HCT116 (cell line): ENCODE measurements at regions of chr1 and their contacts with region 1.

Region 1: DNA sequence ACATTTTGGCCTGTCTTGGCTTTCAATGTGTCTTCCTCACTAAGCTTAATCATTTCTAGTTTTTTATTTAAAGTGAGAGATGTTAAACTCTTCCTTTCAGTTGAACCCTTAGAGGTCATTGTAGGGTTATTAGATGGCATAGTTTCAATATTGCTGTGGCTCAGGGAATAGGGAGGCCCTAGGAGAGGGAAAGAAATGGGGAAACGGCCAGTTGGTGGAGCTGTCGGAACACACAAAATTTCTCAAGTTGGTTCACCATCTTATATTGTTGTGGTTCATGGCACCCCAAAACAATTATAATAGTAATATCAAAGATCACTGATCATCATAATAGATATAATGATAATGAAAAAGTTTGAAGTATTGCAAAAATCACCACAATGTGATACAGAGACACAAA is 31.4 kb upstream of the KAZN start:
- DNase-seq: peak; percentile 8
- ATAC-seq: peak; percentile 71; the same call in 1 of the 2 replicates
- H3K4me3 ChIP-seq: no peak overlapping the region
- H3K27ac ChIP-seq: no peak overlapping the region
- H3K4me1 ChIP-seq: no peaks in the 10 kb centered on the region
- H3K27me3 ChIP-seq: no peaks in the 10 kb centered on the region
- CTCF ChIP-seq: peak; percentile 32 to 50 (median 33); a peak in 5 of 6 replicates
- POLR2A ChIP-seq: no peak
- RAD21 ChIP-seq: peak; percentile 67

Region 2: DNA sequence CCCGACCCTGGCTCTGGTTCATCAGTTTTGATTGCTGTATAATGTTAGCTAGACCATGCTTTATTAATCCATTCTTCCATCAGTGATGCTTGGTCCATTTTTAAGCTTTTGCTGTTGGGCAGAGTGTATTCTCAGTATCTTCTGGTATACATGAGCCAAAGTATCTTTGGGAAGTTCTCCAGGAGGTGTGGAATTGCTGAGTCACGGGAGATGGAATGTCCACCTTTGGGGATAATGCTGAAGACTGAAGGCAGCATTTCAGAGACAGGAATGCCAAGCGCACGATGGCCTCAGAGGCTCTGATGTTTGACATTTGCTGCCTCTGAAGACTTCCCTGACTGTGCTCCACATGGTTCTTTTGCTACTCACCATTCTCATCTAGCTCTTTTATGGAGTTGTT is 234.9 kb before region 1 on chr1:
- CTCF ChIA-PET with region 1: no interaction called
- POLR2A ChIA-PET with region 1: no interaction called
- RAD21 ChIA-PET with region 1: no interaction called
- intact Hi-C with region 1: no loop called
- DNase-seq: no peak
- ATAC-seq: no peak
- H3K4me3 ChIP-seq: no peak overlapping the region
- H3K27ac ChIP-seq: no peak overlapping the region
- H3K4me1 ChIP-seq: peaks cover 0 to 17% of the 10 kb centered on the region in 2 experiments; a peak in 2 of 4 replicates
- H3K27me3 ChIP-seq: no peaks in the 10 kb centered on the region
- CTCF ChIP-seq: no peak
- POLR2A ChIP-seq: no peak
- RAD21 ChIP-seq: no peak

Region 3: DNA sequence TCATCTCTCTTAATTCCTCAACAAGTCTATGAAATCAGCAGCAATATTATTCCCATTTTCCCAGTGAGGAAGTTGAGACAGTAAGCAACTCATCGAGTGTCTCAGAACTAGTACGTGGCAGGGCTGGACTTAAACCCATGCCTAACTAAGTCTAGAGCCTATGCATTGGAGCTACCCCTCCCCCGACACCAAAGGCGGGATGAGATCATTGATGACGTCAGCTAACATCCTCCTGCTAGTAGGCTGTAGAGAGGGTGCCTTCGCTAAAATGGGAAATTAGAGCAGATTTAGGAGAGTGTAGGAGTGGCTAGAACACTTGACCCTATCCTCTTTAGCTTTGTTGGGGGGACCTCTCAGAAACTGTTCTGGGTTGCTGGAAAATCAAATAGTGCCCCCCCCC is 23.7 kb after region 1 on chr1:
- CTCF ChIA-PET with region 1: no interaction called
- POLR2A ChIA-PET with region 1: no interaction called
- RAD21 ChIA-PET with region 1: no interaction called
- intact Hi-C with region 1: no loop called
- DNase-seq: no peak
- ATAC-seq: no peak
- H3K4me3 ChIP-seq: no peak overlapping the region
- H3K27ac ChIP-seq: no peak overlapping the region
- H3K4me1 ChIP-seq: no peaks in the 10 kb centered on the region
- H3K27me3 ChIP-seq: peaks cover 52% of the 10 kb centered on the region
- CTCF ChIP-seq: no peak
- POLR2A ChIP-seq: no peak
- RAD21 ChIP-seq: no peak

Region 4: DNA sequence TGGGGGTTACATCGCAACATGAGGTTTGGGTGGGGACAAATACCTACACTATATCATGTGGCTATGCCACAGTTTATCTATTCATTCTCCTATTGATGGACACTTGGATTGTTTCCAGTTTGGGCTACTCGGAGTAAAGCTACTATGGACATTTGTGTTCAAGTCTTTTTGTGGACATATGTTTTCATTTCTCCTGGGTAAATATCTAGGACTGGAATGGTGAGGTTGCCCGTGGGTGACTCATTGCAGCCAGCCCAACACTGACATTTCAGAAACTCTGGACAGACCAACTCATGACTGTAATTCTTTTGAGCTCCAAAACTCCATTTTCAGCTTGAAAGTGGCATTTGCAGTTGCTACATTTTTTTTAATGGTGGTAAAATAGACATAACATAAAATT is 114.1 kb after region 1 on chr1:
- CTCF ChIA-PET with region 1: no interaction called
- POLR2A ChIA-PET with region 1: no interaction called
- RAD21 ChIA-PET with region 1: no interaction called
- intact Hi-C with region 1: no loop called
- DNase-seq: no peak
- ATAC-seq: no peak
- H3K4me3 ChIP-seq: no peak overlapping the region
- H3K27ac ChIP-seq: no peak overlapping the region
- H3K4me1 ChIP-seq: no peaks in the 10 kb centered on the region
- H3K27me3 ChIP-seq: peaks cover 12% of the 10 kb centered on the region
- CTCF ChIP-seq: no peak
- POLR2A ChIP-seq: no peak
- RAD21 ChIP-seq: no peak

Region 5: GRCh38 chr1:14850566-14850965 is 283.5 kb after region 1 on chr1:
- CTCF ChIA-PET with region 1: no interaction called
- POLR2A ChIA-PET with region 1: no interaction called
- RAD21 ChIA-PET with region 1: no interaction called
- intact Hi-C with region 1: loop called (anchors 1 kb)
- DNase-seq: peak; percentile 6
- ATAC-seq: peak; percentile 71
- H3K4me3 ChIP-seq: no peak overlapping the region
- H3K27ac ChIP-seq: no peak overlapping the region
- H3K4me1 ChIP-seq: no peaks in the 10 kb centered on the region
- H3K27me3 ChIP-seq: peaks cover 43% of the 10 kb centered on the region
- CTCF ChIP-seq: peak; percentile 18 to 39 (median 34); a peak in 4 of 6 replicates
- POLR2A ChIP-seq: no peak
- RAD21 ChIP-seq: peak; percentile 56

Region 6: GRCh38 chr1:14961661-14962267 is 394.7 kb after region 1 on chr1:
- CTCF ChIA-PET with region 1: no interaction called
- POLR2A ChIA-PET with region 1: no interaction called
- RAD21 ChIA-PET with region 1: no interaction called
- intact Hi-C with region 1: no loop called
- DNase-seq: no peak
- ATAC-seq: peak; percentile 71
- H3K4me3 ChIP-seq: no peak overlapping the region
- H3K27ac ChIP-seq: no peak overlapping the region
- H3K4me1 ChIP-seq: no peaks in the 10 kb centered on the region
- H3K27me3 ChIP-seq: no peaks in the 10 kb centered on the region
- CTCF ChIP-seq: no peak
- POLR2A ChIP-seq: no peak
- RAD21 ChIP-seq: no peak

Region 7: GRCh38 chr1:15028102-15028501 is 461.0 kb after region 1 on chr1:
- CTCF ChIA-PET with region 1: interaction called, 3 read pairs
- POLR2A ChIA-PET with region 1: no interaction called
- RAD21 ChIA-PET with region 1: no interaction called
- intact Hi-C with region 1: loop called (anchors 5 kb)
- DNase-seq: no peak
- ATAC-seq: peak; percentile 34; the same call in 1 of the 2 replicates
- H3K4me3 ChIP-seq: no peak overlapping the region
- H3K27ac ChIP-seq: no peak overlapping the region
- H3K4me1 ChIP-seq: peaks cover 6 to 23% of the 10 kb centered on the region in 2 experiments; a peak in 3 of 4 replicates
- H3K27me3 ChIP-seq: no peaks in the 10 kb centered on the region
- CTCF ChIP-seq: no peak
- POLR2A ChIP-seq: no peak
- RAD21 ChIP-seq: no peak

Region 8: DNA sequence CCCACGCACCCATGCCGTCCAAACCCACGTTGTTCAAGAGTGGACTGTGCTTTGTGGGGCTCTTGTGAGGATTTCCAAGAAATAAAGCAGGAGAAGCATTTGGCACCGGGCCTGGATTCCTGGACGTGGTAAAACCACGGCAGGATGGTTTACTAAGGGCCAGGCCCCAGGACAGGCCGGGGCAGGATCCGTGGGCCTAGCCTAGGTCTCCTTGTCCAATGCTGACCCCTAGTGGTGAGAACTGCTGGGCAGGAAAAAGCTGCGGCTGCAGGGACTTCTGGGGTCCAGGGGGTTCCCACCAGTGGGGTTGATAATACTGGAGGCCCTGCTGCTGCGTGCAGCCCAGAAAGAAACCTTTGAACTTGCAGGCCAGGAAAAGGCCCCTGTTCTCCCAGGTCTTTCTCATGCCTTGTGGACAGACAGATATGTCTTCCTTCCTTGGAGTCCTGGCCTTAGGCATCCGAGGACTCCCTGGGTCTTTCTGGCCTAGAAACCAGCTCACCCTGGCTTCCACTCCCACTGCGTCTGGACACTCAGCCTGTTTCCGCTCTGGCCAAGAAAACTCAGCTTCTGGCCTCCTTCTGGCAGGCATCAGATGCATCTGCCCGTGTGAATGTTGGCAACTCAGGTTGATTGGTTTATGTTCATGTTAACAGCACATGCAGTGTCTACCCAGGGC is 479.6 kb after region 1 on chr1:
- CTCF ChIA-PET with region 1: no interaction called
- POLR2A ChIA-PET with region 1: no interaction called
- RAD21 ChIA-PET with region 1: no interaction called
- intact Hi-C with region 1: loop called (anchors 1 kb)
- DNase-seq: peak; percentile 33
- ATAC-seq: peak; percentile 87
- H3K4me3 ChIP-seq: no peak overlapping the region
- H3K27ac ChIP-seq: no peak overlapping the region
- H3K4me1 ChIP-seq: no peaks in the 10 kb centered on the region
- H3K27me3 ChIP-seq: no peaks in the 10 kb centered on the region
- CTCF ChIP-seq: peak; percentile 73 to 93 (median 91)
- POLR2A ChIP-seq: no peak
- RAD21 ChIP-seq: peak; percentile 94

Region 9: DNA sequence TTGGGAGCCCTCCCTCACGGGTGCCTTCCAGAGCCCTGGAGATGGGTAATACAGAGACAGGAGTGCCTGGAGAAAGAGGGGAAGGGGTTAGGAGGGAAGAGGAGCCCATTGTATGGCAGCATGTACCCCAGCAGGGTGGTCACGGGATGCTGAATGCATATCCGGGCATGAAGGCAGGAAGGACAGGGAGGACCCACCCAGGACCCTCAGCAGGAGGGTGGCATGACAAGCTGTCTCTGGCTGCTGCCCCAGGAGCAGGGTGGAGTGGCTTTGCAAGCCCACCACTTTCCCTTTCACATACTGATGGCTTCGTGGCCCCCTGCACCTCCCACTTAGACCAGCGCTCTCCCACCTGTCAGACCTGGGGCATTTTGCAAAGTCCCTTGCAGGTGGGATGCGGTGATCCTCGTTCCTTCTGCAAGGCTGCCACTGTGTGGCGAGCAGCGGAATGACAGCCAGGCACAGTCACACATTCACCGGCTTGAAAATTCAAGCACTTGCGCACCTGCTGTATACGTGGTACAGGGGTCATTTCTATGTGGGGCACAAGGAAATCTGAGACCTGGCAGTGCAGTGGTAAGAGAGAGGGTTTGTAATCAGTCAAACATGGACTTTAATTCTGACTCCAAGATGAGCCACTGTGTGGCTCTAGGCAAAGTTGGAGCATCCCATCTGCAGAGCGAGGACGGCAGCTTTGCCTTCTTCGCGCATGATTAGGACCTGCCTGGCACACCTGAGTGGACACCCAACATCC is 533.2 kb after region 1 on chr1:
- CTCF ChIA-PET with region 1: no interaction called
- POLR2A ChIA-PET with region 1: no interaction called
- RAD21 ChIA-PET with region 1: no interaction called
- intact Hi-C with region 1: loop called (anchors 10 kb)
- DNase-seq: peak; percentile 37
- ATAC-seq: peak; percentile 93
- H3K4me3 ChIP-seq: no peak overlapping the region
- H3K27ac ChIP-seq: no peak overlapping the region
- H3K4me1 ChIP-seq: no peaks in the 10 kb centered on the region
- H3K27me3 ChIP-seq: peaks cover 12% of the 10 kb centered on the region; the same call in 1 of the 2 replicates
- CTCF ChIP-seq: peak; percentile 81 to 98 (median 97)
- POLR2A ChIP-seq: no peak
- RAD21 ChIP-seq: peak; percentile 97

Region 10: GRCh38 chr1:15304701-15305467 is 737.8 kb after region 1 on chr1:
- CTCF ChIA-PET with region 1: no interaction called
- POLR2A ChIA-PET with region 1: no interaction called
- RAD21 ChIA-PET with region 1: no interaction called
- intact Hi-C with region 1: loop called (anchors 10 kb)
- DNase-seq: peak; percentile 26
- ATAC-seq: peak; percentile 95
- H3K4me3 ChIP-seq: no peak overlapping the region
- H3K27ac ChIP-seq: no peak overlapping the region
- H3K4me1 ChIP-seq: peaks cover 0 to 6% of the 10 kb centered on the region in 2 experiments; a peak in 2 of 4 replicates
- H3K27me3 ChIP-seq: no peaks in the 10 kb centered on the region
- CTCF ChIP-seq: peak; percentile 70 to 100 (median 86)
- POLR2A ChIP-seq: no peak
- RAD21 ChIP-seq: peak; percentile 90